AG04449 (cell line): ENCODE measurements at regions of chr9 and their contacts with region 1.

Region 1: GRCh38 chr9:129495534-129496325 is 125.2 kb downstream of the C9orf50 start:
- DNase-seq: no peak
- H3K4me3 ChIP-seq: peak overlapping the region; percentile 78
- CTCF ChIP-seq: no peak

Region 2: DNA sequence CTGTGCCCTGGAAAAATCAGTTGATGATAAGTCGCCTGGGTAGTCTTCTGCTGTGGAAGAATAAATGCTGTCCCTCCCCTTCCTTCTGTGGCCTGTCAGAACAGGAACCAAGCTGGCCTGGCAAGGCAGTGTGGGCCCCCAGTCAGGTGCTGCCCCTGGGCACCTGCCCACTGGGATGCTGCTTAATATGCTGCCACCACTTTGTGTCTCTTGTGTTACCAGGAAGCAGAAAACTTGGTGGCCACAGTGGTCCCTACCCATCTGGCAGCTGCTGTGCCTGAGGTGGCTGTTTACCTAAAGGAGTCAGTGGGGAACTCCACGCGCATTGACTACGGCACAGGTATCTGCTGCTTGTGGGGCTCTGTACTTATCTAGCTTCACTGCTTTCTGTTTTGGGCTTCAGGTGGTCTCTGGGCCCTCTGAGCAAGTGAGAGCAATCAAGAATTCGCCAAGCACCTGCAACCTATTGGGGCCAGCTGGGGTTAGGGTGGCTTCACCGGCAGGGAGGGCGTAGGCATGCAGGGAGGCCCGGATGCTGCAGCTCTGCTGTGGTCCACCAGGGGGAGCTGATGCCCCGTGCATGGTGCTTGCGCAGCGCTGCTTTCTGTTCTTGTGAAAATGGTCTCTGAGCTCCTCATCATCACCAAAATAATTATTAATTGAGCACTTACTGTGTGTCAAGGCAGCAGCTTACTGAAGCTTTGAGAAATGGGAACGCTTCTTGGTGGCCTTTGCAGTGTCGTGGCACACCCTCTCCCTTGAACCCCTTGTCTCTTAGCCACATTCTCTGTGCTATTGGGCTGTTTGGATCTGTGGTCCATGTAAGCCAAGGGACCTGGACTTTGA is 364.2 kb before region 1 on chr9:
- CTCF ChIA-PET with region 1: interaction called, 10 read pairs
- POLR2A ChIA-PET with region 1: no interaction called
- DNase-seq: no peak
- H3K4me3 ChIP-seq: no peak overlapping the region
- CTCF ChIP-seq: peak; percentile 99

Region 3: GRCh38 chr9:129362287-129363000 is 133.3 kb before region 1 on chr9:
- CTCF ChIA-PET with region 1: no interaction called
- POLR2A ChIA-PET with region 1: no interaction called
- DNase-seq: no peak
- H3K4me3 ChIP-seq: no peak overlapping the region
- CTCF ChIP-seq: no peak

Region 4: DNA sequence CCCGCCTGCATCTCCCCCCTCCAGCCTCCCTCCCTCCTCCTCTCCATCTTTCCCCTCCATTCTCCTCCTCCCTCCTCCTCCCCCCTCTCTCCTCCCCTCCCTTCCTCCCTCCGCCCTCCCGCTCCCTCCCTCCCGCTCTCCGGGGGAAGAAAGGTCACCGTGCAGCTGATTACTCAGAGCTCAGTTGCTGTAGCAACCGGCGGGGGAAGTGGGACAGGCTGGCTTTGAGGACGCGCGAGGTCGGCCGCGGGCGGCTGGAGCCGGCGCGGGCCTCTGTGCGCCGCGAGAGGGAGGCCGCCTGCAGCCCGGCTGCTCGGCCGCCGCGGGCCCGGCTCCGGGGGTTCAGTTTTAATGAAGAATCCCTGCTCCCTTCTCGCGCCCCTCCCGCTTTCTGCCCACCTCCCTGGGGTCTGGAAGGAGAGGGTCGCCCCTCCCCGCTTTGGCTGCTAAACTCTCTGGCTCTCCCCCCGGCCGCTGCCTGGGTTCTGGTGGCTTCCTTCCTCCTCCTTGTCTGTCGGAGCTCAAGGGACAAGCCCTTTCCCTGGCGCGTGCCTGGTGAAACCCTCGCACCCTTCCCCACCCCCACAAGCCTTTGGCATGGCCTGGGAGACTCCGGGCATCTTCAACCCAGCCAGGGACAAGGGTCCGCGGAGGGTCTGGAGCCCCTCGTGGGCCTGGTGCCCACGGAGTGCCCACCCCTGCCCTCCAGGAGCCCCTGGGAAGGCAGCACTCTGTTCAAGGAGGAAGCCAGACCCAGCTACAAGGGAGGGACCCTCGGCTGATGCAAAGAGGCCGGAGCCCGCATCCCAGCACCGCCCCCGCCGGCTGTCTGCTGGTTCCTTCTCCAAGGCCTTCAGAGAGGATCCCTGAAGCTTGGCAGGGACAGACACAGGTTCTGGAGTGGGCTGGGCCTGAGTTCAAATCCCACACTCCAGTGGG is 35.1 kb before region 1 on chr9:
- CTCF ChIA-PET with region 1: interaction called, 4 read pairs
- POLR2A ChIA-PET with region 1: interaction called, 10 read pairs
- DNase-seq: peak; percentile 92
- H3K4me3 ChIP-seq: peak overlapping the region; percentile 53
- CTCF ChIP-seq: peak; percentile 24

Region 5: DNA sequence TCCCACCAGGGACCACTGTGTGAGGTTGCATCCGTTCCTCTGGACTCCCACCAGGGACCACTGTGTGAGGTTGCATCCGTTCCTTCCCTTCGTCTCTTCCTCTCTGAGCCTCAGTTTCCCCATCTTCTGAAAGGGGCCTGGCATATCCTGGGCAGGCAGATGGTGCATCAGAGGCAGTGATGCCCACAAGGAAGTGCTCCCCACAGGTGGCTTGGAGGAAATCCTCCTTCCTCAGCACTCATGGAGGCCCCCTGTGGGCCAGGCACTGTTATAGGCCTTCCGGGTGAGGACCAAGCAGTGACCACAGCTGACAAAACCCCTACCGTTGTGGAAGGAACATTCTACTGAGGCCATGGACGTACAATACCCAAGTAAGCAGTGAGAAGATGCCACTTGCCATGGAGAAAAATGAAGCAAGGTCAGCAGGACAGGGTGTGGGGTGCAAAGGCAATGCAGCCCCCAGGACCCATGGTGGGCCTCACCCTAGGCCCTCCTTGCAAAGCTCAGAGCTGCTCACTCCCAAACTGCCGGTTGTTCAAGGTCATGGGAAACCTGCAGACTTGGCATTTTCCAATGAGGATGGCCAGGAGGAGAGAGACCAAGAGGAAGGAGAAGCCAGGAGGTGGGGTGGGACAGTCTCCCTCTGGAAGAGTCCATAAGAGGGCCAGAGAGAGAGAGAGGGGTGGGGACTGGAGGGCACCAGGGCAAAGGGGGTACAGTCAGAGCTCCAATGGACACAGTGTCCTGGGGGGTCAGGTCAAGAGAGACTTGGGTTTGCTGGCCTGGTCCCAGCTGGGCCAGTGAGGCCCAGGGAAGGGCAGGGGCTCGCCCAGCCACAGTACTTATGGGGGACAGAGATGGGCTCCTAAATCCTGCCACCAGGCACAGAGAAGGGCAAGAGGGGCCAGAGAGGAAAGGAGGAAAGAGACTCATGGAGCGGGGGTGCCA is 74.0 kb after region 1 on chr9:
- CTCF ChIA-PET with region 1: interaction called, 4 read pairs
- POLR2A ChIA-PET with region 1: interaction called, 31 read pairs
- DNase-seq: no peak
- H3K4me3 ChIP-seq: peak overlapping the region; percentile 3
- CTCF ChIP-seq: peak; percentile 52

Region 6: GRCh38 chr9:129610473-129611301 is 115.0 kb after region 1 on chr9:
- CTCF ChIA-PET with region 1: interaction called, 14 read pairs
- POLR2A ChIA-PET with region 1: interaction called, 14 read pairs
- DNase-seq: no peak
- H3K4me3 ChIP-seq: peak overlapping the region; percentile 66
- CTCF ChIP-seq: peak; percentile 86